Endothelial cell of umbilical vein (primary cell): ENCODE measurements at regions of chr4 and their contacts with region 1.

Region 1: DNA sequence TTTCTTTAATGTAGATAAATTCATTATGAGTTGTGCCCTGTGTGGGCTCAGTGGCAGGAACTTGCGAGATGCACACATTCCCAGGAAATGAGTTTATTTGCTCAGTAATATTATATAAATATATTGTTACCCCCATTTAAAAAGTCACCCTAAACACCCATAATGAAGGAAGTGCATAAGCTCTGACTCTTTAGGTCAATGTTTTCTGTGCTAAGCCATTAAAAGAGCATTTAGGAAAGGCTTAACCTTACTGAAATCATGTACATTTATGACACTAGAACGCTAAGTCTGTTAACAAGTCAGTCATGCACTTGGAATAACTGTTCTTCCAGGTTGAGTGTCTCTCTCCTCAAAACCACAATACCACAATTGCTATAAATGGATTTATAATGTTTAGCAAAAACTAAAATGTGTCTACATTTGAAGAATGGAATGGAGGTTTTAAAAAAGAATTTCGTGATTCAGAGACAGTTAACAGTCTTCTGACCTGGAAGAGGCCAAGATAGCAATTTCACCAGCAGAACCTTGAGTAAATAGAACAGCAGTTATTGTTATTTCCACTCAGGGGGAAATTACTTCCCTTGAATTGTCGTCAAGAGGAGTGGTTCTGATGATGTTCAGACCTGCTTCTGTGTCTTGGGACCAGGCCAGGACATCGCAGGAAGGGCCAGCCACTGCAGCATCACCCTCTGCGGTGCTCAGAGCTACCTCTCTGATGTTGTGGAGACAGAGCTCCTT is 91.1 kb upstream of the VEGFC start:
- DNase-seq: peak; percentile 76
- H3K4me3 ChIP-seq: peak overlapping the region in 1 of 3 experiments; percentile 33
- H3K27ac ChIP-seq: peak overlapping the region; percentile 86
- H3K4me1 ChIP-seq: peaks cover 35% of the 10 kb centered on the region
- H3K27me3 ChIP-seq: no peaks in the 10 kb centered on the region
- CTCF ChIP-seq: no peak
- POLR2A ChIP-seq: no peak

Region 2: GRCh38 chr4:176810481-176811249 is 73.2 kb before region 1 on chr4:
- CTCF ChIA-PET with region 1: no interaction called
- POLR2A ChIA-PET with region 1: no interaction called
- dilution Hi-C with region 1: no loop called
- intact Hi-C with region 1: loop called (anchors 1 kb)
- DNase-seq: peak; percentile 73
- H3K4me3 ChIP-seq: no peak overlapping the region
- H3K27ac ChIP-seq: peak overlapping the region; percentile 44
- H3K4me1 ChIP-seq: peaks cover 21% of the 10 kb centered on the region
- H3K27me3 ChIP-seq: no peaks in the 10 kb centered on the region
- CTCF ChIP-seq: no peak
- POLR2A ChIP-seq: no peak

Region 3: DNA sequence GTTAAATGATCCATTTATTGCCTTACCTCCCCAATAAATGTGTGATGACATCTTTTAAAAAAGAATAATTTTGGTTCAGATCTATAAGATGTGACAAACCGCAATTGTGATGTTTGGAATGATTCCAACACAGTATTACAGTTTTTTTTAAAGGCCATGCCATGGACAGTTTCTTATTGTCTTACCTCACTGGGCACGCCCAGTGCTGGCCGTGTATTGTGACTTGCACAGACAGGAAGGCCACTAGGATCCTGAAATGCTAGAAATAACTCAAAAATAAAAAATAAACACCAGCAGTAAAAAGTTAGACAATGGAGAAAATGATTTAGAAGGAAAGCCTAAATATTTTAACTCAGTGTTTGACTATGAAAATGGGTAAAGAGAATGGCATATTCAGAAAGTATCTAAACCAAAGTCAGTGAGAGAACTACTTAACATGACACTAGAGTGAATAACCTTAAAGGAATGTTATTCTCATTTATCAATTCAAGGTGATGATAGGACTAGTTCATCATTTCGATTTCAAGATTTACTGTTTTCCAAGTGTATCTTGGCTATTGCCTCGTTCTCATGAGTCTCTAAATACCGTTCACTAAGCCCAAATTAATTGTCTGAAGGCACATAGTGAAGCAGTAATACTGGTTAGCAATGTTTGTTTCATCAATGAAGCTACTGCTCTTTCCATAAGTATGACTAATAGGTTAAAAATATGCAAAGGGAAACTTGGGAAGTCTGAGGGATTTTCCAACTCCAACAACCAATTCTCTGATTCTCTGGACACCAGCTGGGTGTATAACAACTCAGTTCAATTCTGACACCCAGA is 45.0 kb before region 1 on chr4:
- CTCF ChIA-PET with region 1: no interaction called
- POLR2A ChIA-PET with region 1: no interaction called
- dilution Hi-C with region 1: no loop called
- intact Hi-C with region 1: loop called (anchors 1 kb)
- DNase-seq: peak; percentile 77
- H3K4me3 ChIP-seq: no peak overlapping the region
- H3K27ac ChIP-seq: peak overlapping the region; percentile 71
- H3K4me1 ChIP-seq: peaks cover 74% of the 10 kb centered on the region
- H3K27me3 ChIP-seq: no peaks in the 10 kb centered on the region
- CTCF ChIP-seq: no peak
- POLR2A ChIP-seq: no peak

Region 4: GRCh38 chr4:176902710-176903323 is 19.0 kb after region 1 on chr4:
- CTCF ChIA-PET with region 1: interaction called, 3 read pairs
- POLR2A ChIA-PET with region 1: no interaction called
- dilution Hi-C with region 1: no loop called
- intact Hi-C with region 1: loop called (anchors 1 kb)
- DNase-seq: peak; percentile 57
- H3K4me3 ChIP-seq: no peak overlapping the region
- H3K27ac ChIP-seq: peak overlapping the region; percentile 55
- H3K4me1 ChIP-seq: peaks cover 15% of the 10 kb centered on the region
- H3K27me3 ChIP-seq: no peaks in the 10 kb centered on the region
- CTCF ChIP-seq: no peak
- POLR2A ChIP-seq: no peak

Region 5: DNA sequence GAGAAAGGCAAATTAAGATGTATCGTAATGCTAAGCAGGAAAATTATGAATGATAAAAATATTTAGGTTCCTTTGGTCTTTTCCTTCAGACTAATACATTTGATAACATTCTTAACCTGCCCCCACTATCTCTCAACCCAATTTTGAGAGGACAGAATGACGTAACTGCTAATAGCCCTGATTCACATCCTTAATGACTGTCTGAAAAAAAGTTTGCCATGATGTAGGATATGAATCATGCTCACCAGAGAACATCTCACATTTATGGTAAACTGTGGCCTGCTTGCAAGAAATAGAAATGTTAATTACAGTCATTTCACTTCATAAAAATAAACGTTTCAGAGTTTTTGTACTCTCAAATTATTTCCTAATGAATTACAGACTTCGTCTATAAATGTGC is 36.8 kb after region 1 on chr4:
- CTCF ChIA-PET with region 1: interaction called, 3 read pairs
- POLR2A ChIA-PET with region 1: no interaction called
- dilution Hi-C with region 1: no loop called
- intact Hi-C with region 1: loop called (anchors 1 kb)
- DNase-seq: peak; percentile 91
- H3K4me3 ChIP-seq: peak overlapping the region in 1 of 3 experiments; percentile 41
- H3K27ac ChIP-seq: peak overlapping the region; percentile 66
- H3K4me1 ChIP-seq: peaks cover 43% of the 10 kb centered on the region
- H3K27me3 ChIP-seq: no peaks in the 10 kb centered on the region
- CTCF ChIP-seq: no peak
- POLR2A ChIP-seq: no peak

Region 6: DNA sequence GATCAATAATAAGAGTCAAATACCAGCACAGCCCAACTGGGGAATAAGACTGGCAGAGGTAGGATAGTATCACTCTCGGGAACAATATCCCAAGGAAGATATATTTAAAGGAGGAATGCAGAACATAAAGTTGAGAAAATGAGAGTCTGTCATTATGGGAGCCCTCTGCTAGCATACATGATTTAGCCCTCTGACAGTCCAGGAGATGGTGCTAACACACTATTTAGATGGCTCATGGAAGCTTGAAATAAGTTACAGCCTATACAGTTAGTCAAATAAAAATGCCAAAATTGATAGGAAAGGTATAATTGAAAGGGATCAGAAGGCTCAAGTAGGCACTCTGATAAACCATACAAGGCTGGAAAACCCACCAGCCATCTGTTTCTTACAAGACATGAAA is 224.9 kb after region 1 on chr4:
- CTCF ChIA-PET with region 1: no interaction called
- POLR2A ChIA-PET with region 1: no interaction called
- dilution Hi-C with region 1: no loop called
- intact Hi-C with region 1: no loop called
- DNase-seq: no peak
- H3K4me3 ChIP-seq: no peak overlapping the region
- H3K27ac ChIP-seq: no peak overlapping the region
- H3K4me1 ChIP-seq: no peaks in the 10 kb centered on the region
- H3K27me3 ChIP-seq: no peaks in the 10 kb centered on the region
- CTCF ChIP-seq: no peak
- POLR2A ChIP-seq: no peak